Upper lobe of right lung (tissue), 1 donor: ENCODE measurements at regions of chr11 and their contacts with region 1.

Region 1: GRCh38 chr11:36292311-36292722 is 3.1 kb upstream of the COMMD9 start:
- DNase-seq: no peak
- ATAC-seq: peak; percentile 68
- H3K4me3 ChIP-seq: no peak overlapping the region
- H3K27ac ChIP-seq: no peak overlapping the region
- H3K4me1 ChIP-seq: peaks cover 14% of the 10 kb centered on the region
- H3K27me3 ChIP-seq: no peaks in the 10 kb centered on the region
- CTCF ChIP-seq: peak; percentile 61

Region 2: GRCh38 chr11:36478700-36479329 is 186.5 kb after region 1 on chr11:
- intact Hi-C with region 1: loop called (anchors 10 kb)
- DNase-seq: no peak
- ATAC-seq: peak; percentile 69
- H3K4me3 ChIP-seq: no peak overlapping the region
- H3K27ac ChIP-seq: no peak overlapping the region
- H3K4me1 ChIP-seq: no peaks in the 10 kb centered on the region
- H3K27me3 ChIP-seq: no peaks in the 10 kb centered on the region
- CTCF ChIP-seq: peak; percentile 57